CD4-positive, alpha-beta memory T cell (primary cell): ENCODE measurements at regions of chr13 and their contacts with region 1.

Region 1: GRCh38 chr13:49502954-49503353 is 7.2 kb downstream of the PHF11 start:
- DNase-seq: no peak
- H3K4me3 ChIP-seq: no peak overlapping the region
- H3K4me3 Mint-ChIP-seq: peak overlapping the region in 1 of 8 donors; percentile 10
- H3K27ac ChIP-seq: no peak overlapping the region
- H3K27ac Mint-ChIP-seq: peak overlapping the region in 5 of 7 donors; percentile 19 to 78 (median 35)
- H3K4me1 ChIP-seq: peaks cover 29% of the 10 kb centered on the region
- H3K4me1 Mint-ChIP-seq: peaks cover 37 to 56% (median 45%) of the 10 kb centered on the region in 4 donors
- H3K27me3 ChIP-seq: no peaks in the 10 kb centered on the region
- H3K27me3 Mint-ChIP-seq: no peaks in the 10 kb centered on the region

Region 2: GRCh38 chr13:49517461-49517860 is 14.5 kb after region 1 on chr13:
- CTCF ChIA-PET with region 1: interaction called, 3 read pairs
- POLR2A ChIA-PET with region 1: no interaction called
- intact Hi-C with region 1: loop called (anchors 2 kb)
- DNase-seq: no peak
- H3K4me3 ChIP-seq: no peak overlapping the region
- H3K4me3 Mint-ChIP-seq: no peak overlapping the region
- H3K27ac ChIP-seq: no peak overlapping the region
- H3K27ac Mint-ChIP-seq: no peak overlapping the region
- H3K4me1 ChIP-seq: no peaks in the 10 kb centered on the region
- H3K4me1 Mint-ChIP-seq: peaks cover 0 to 18% (median 7%) of the 10 kb centered on the region in 4 donors
- H3K27me3 ChIP-seq: no peaks in the 10 kb centered on the region
- H3K27me3 Mint-ChIP-seq: no peaks in the 10 kb centered on the region